HCT116 (cell line): ENCODE measurements at regions of chr11 and their contacts with region 1.

Region 1: GRCh38 chr11:1652771-1653540 is 23.4 kb downstream of the KRTAP5-5 start:
- DNase-seq: no peak
- ATAC-seq: peak; percentile 95
- H3K4me3 ChIP-seq: no peak overlapping the region
- H3K27ac ChIP-seq: no peak overlapping the region
- H3K4me1 ChIP-seq: peaks cover 0 to 7% of the 10 kb centered on the region in 2 experiments; a peak in 3 of 4 replicates
- H3K27me3 ChIP-seq: no peaks in the 10 kb centered on the region
- CTCF ChIP-seq: peak; percentile 92 to 95 (median 93)
- POLR2A ChIP-seq: no peak
- RAD21 ChIP-seq: peak; percentile 97

Region 2: DNA sequence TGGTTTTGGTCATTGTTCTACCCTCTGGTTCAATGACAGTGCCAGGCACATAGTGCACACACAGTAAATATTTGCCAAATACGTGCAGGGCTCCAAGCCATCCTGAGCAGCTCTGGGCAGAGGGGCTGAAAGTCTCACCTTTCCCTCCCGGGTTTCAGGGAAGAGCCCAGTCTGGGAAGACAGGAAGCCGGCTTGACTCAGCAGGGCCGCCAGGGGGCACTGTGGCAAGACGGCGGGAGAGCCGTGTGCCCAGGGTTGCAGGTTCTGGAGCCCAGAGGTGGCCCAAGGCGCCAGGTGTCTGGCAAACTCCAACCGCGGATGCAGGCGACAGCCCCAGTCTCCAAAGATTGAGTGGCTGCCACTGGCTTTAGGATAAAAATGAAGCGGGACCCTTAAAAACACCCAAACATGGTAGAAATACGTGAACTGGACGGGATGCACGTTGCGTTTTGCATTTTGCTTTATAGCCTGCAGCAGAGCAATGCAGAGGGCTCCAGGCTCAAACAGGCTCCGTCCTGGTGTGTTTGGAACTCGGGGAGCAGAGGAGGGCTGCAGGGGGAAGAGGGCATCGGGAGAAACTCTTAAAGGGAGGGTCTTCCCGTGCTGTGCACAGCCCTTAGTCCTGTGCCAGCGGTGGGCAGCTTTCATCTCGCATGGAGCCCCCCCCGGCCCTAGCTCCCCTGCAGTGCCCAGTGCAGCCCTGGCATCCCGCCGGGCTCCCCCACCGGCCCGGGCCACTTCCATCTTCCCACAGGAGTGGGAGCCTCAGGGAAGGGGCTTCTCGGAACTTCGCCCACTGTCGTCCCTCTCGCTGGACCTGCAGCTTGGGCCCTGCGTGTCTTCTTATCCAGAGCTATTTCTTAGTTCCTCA is 12.6 kb before region 1 on chr11:
- CTCF ChIA-PET with region 1: interaction called, 31 read pairs
- POLR2A ChIA-PET with region 1: no interaction called
- RAD21 ChIA-PET with region 1: no interaction called
- intact Hi-C with region 1: no loop called
- DNase-seq: no peak
- ATAC-seq: peak; percentile 94
- H3K4me3 ChIP-seq: no peak overlapping the region
- H3K27ac ChIP-seq: no peak overlapping the region
- H3K4me1 ChIP-seq: peaks cover 0 to 9% of the 10 kb centered on the region in 2 experiments; a peak in 1 of 4 replicates
- H3K27me3 ChIP-seq: no peaks in the 10 kb centered on the region
- CTCF ChIP-seq: peak; percentile 63 to 94 (median 90)
- POLR2A ChIP-seq: no peak
- RAD21 ChIP-seq: peak; percentile 46

Region 3: DNA sequence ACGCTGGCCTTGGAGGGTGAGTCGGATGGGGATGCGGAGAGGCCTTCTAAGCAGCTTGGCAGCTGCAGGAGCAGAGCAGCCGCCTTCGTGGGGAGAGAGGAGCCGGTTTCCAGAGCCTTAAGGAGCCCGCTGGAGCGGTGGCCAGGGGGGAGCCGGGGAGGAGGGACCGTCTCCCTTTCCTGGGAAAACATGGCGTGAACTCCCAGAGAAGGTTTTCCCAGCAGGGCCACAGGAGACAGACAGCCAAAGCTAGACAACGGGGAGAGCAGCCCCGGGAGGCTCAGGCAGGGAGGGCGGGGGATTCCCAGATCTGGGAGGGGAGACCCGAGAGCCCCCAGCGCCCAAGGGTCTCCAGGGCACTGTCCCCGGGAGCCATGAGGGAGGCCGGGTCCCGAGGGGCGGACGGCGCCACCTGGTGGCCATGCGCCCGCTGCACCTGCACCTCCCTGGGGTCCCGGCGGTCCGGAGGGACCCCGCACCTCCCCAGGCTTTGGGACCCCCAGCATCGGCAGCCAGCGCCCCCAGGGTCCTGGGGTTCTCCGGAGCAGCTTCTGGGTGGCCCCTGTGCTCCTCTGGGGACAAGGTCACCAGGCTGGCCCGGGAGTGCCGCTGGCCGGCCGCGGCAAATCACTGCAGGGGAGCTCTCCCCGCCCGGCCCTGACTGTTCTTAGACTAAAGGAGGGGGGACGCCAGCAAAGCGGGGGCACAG is 179.4 kb after region 1 on chr11:
- CTCF ChIA-PET with region 1: interaction called, 66 read pairs
- POLR2A ChIA-PET with region 1: interaction called, 6 read pairs
- RAD21 ChIA-PET with region 1: interaction called, 7 to 26 read pairs
- intact Hi-C with region 1: loop called (anchors 2 kb)
- DNase-seq: no peak
- ATAC-seq: peak; percentile 54
- H3K4me3 ChIP-seq: peak overlapping the region; percentile 31 to 55
- H3K27ac ChIP-seq: no peak overlapping the region; the same call in 1 of the 2 replicates
- H3K4me1 ChIP-seq: peaks cover 57 to 82% of the 10 kb centered on the region in 2 experiments
- H3K27me3 ChIP-seq: no peaks in the 10 kb centered on the region
- CTCF ChIP-seq: peak in 2 of 3 experiments; percentile 94 to 96; a peak in 4 of 6 replicates
- POLR2A ChIP-seq: no peak
- RAD21 ChIP-seq: no peak

Region 4: GRCh38 chr11:1882519-1883238 is 229.7 kb after region 1 on chr11:
- CTCF ChIA-PET with region 1: interaction called, 22 read pairs
- POLR2A ChIA-PET with region 1: no interaction called
- RAD21 ChIA-PET with region 1: interaction called in 1 of 2 experiments, 4 read pairs
- intact Hi-C with region 1: loop called (anchors 5 kb)
- DNase-seq: peak; percentile 43
- ATAC-seq: peak; percentile 99
- H3K4me3 ChIP-seq: no peak overlapping the region
- H3K27ac ChIP-seq: no peak overlapping the region
- H3K4me1 ChIP-seq: no peaks in the 10 kb centered on the region
- H3K27me3 ChIP-seq: peaks cover 4% of the 10 kb centered on the region; the same call in 1 of the 2 replicates
- CTCF ChIP-seq: peak; percentile 88 to 92 (median 91)
- POLR2A ChIP-seq: no peak
- RAD21 ChIP-seq: peak; percentile 95

Region 5: DNA sequence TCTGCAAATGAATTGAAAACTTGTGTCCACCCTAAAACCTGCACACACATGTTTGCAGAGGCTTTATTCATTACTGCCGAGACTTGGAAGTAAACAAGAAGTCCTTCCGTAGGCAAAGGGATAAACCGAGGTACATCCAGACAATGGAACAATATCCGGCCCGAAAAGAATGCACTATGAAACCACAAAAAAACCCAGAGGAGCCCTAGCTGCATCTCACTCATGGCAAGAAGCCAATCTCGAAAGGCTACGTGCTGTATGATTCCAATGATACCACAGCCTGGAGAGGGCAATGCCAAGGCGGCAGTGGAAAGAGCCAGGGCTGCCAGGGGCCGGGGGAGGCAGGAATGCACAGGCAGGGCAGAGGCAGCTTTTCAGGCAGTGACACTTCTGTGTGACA is 291.0 kb after region 1 on chr11:
- CTCF ChIA-PET with region 1: interaction called, 13 read pairs
- POLR2A ChIA-PET with region 1: no interaction called
- RAD21 ChIA-PET with region 1: interaction called in 1 of 2 experiments, 3 read pairs
- intact Hi-C with region 1: no loop called
- DNase-seq: no peak
- ATAC-seq: no peak
- H3K4me3 ChIP-seq: no peak overlapping the region
- H3K27ac ChIP-seq: no peak overlapping the region
- H3K4me1 ChIP-seq: peaks cover 0 to 9% of the 10 kb centered on the region in 2 experiments; a peak in 1 of 4 replicates
- H3K27me3 ChIP-seq: no peaks in the 10 kb centered on the region
- CTCF ChIP-seq: no peak
- POLR2A ChIP-seq: no peak
- RAD21 ChIP-seq: no peak

Region 6: GRCh38 chr11:2002042-2002776 is 349.3 kb after region 1 on chr11:
- CTCF ChIA-PET with region 1: interaction called, 25 read pairs
- POLR2A ChIA-PET with region 1: no interaction called
- RAD21 ChIA-PET with region 1: interaction called, 3 to 6 read pairs
- intact Hi-C with region 1: no loop called
- DNase-seq: no peak
- ATAC-seq: no peak
- H3K4me3 ChIP-seq: no peak overlapping the region
- H3K27ac ChIP-seq: no peak overlapping the region
- H3K4me1 ChIP-seq: no peaks in the 10 kb centered on the region
- H3K27me3 ChIP-seq: no peaks in the 10 kb centered on the region
- CTCF ChIP-seq: no peak
- POLR2A ChIP-seq: no peak
- RAD21 ChIP-seq: no peak